Panc1 (cell line): ENCODE measurements at regions of chr5 and their contacts with region 1.

Region 1: GRCh38 chr5:77867194-77867691 is 91.1 kb upstream of the TBCA start:
- DNase-seq: no peak
- ATAC-seq: no peak
- H3K4me3 ChIP-seq: no peak overlapping the region
- H3K27ac ChIP-seq: no peak overlapping the region
- H3K4me1 ChIP-seq: no peaks in the 10 kb centered on the region
- H3K27me3 ChIP-seq: peaks cover 5% of the 10 kb centered on the region; the same call in 1 of the 2 replicates
- CTCF ChIP-seq: peak; percentile 17; the same call in 1 of the 2 replicates

Region 2: DNA sequence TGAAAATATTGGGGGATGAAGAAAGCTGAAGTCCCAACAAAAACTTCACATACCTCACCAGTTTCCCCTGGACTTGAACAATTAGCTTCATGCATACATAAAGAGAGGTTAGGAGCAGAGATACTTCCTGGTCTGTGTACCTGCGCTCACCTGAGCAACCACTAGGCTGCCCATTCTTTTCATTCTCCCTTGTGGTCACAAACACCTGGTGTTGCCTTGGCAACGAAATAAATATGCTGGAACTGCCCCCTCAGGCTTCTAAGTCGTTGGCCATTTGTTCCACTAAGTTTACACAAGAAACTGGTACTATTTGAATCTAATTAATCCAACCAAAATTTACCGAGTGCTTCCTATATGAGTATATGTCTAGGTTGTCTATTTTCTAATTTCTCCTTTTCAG is 246.8 kb before region 1 on chr5:
- CTCF ChIA-PET with region 1: interaction called, 16 read pairs
- POLR2A ChIA-PET with region 1: no interaction called
- in situ Hi-C with region 1: no loop called
- intact Hi-C with region 1: no loop called
- DNase-seq: no peak
- ATAC-seq: no peak
- H3K4me3 ChIP-seq: no peak overlapping the region
- H3K27ac ChIP-seq: no peak overlapping the region
- H3K4me1 ChIP-seq: no peaks in the 10 kb centered on the region
- H3K27me3 ChIP-seq: peaks cover 31% of the 10 kb centered on the region
- CTCF ChIP-seq: no peak; the same call in 1 of the 2 replicates

Region 3: GRCh38 chr5:77697692-77698091 is 169.6 kb before region 1 on chr5:
- CTCF ChIA-PET with region 1: no interaction called
- POLR2A ChIA-PET with region 1: no interaction called
- in situ Hi-C with region 1: no loop called
- intact Hi-C with region 1: no loop called
- DNase-seq: no peak
- ATAC-seq: no peak
- H3K4me3 ChIP-seq: no peak overlapping the region
- H3K27ac ChIP-seq: no peak overlapping the region
- H3K4me1 ChIP-seq: no peaks in the 10 kb centered on the region
- H3K27me3 ChIP-seq: no peaks in the 10 kb centered on the region
- CTCF ChIP-seq: no peak